ENCODE measurements at regions of chr1 and their contacts with region 1.

Region 1: DNA sequence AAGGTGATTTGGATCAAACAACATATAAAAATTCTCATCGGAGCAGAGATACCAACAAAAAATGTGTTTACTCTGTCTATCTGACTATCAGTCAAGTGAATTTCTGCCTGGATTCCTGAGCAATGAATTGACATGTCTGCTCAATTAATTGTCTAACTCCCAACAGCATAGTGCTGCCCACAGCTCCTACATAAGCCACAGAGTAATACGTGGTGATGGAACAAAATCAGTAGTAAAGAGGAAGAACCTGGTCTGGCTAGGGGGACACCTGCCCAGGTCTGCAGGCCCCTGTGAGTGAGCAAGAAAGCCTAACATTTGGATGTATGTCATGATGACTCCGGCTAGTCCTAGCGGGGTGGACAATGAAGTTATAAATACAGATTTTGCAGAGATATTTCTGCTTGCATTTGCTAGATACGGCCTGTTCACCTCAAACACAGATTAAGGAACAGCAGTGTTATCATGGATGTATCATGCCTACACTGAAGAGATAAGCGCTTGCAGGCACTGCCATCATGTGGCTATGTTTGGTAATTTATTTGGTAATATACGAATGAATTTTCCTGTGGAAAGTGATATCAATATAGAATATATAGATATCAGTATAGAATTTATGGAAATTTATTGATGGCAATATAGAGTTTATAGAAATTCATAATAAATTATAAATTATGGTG is 69.6 kb upstream of the LRRC8B start:
- DNase-seq: no peak
- ATAC-seq: peak; percentile 94
- H3K4me3 ChIP-seq: no peak overlapping the region
- H3K27ac ChIP-seq: no peak overlapping the region
- H3K4me1 ChIP-seq: no peaks in the 10 kb centered on the region
- H3K27me3 ChIP-seq: no peaks in the 10 kb centered on the region
- CTCF ChIP-seq: peak; percentile 70

Region 2: GRCh38 chr1:88998716-88999115 is 456.3 kb before region 1 on chr1:
- intact Hi-C with region 1: loop called (anchors 5 kb)
- DNase-seq: no peak
- ATAC-seq: peak; percentile 93
- H3K4me3 ChIP-seq: no peak overlapping the region
- H3K27ac ChIP-seq: no peak overlapping the region
- H3K4me1 ChIP-seq: peaks cover 8% of the 10 kb centered on the region
- H3K27me3 ChIP-seq: no peaks in the 10 kb centered on the region
- CTCF ChIP-seq: peak; percentile 59

Region 3: GRCh38 chr1:89358287-89358893 is 96.6 kb before region 1 on chr1:
- intact Hi-C with region 1: loop called (anchors 10 kb)
- DNase-seq: peak; percentile 77
- ATAC-seq: peak; percentile 95
- H3K4me3 ChIP-seq: no peak overlapping the region
- H3K27ac ChIP-seq: no peak overlapping the region
- H3K4me1 ChIP-seq: peaks cover 3% of the 10 kb centered on the region
- H3K27me3 ChIP-seq: no peaks in the 10 kb centered on the region
- CTCF ChIP-seq: peak; percentile 81